ENCODE measurements at regions of chr2 and their contacts with region 1.

Region 1: GRCh38 chr2:196131384-196131937 is 39.9 kb downstream of the STK17B start:
- DNase-seq: peak; percentile 83
- ATAC-seq: peak; percentile 98
- H3K4me3 ChIP-seq: no peak overlapping the region; a peak in 1 of 6 replicates
- H3K27ac ChIP-seq: no peak overlapping the region
- H3K4me1 ChIP-seq: peaks cover 8% of the 10 kb centered on the region
- H3K27me3 ChIP-seq: no peaks in the 10 kb centered on the region
- CTCF ChIP-seq: peak; percentile 96
- EP300 ChIP-seq: no peak
- POLR2A ChIP-seq: no peak
- RAD21 ChIP-seq: peak; percentile 93

Region 2: DNA sequence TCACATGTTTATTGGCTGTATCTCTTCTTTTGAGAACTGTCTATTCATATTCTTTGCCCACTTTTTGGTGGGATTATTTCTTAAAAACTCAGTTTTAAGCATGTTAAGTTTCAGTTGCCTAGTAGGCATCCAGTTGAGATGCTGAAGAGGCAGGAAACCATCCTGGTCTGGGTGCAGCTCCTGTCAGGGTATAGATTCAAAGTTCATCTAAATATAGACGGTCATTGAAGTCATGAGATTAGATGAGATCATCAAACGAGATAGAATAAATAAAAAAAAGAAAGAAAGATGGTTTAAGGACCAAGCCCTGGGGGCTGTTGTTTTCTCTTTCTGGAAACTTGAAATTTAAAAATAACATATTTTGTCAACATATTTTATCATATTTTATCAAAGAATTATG is 53.6 kb before region 1 on chr2:
- CTCF ChIA-PET with region 1: interaction called, 3 read pairs
- POLR2A ChIA-PET with region 1: no interaction called
- in situ Hi-C with region 1: no loop called
- intact Hi-C with region 1: loop called (anchors 1 kb)
- DNase-seq: no peak
- ATAC-seq: 0 out of 3 replicates have a peak, but pooled peaks have one; percentile 31
- H3K4me3 ChIP-seq: no peak overlapping the region
- H3K27ac ChIP-seq: no peak overlapping the region
- H3K4me1 ChIP-seq: peaks cover 19% of the 10 kb centered on the region
- H3K27me3 ChIP-seq: no peaks in the 10 kb centered on the region
- CTCF ChIP-seq: no peak
- EP300 ChIP-seq: no peak
- POLR2A ChIP-seq: no peak
- RAD21 ChIP-seq: no peak

Region 3: GRCh38 chr2:196337208-196337953 is 205.9 kb after region 1 on chr2:
- CTCF ChIA-PET with region 1: interaction called, 54 read pairs
- POLR2A ChIA-PET with region 1: no interaction called
- in situ Hi-C with region 1: loop called (anchors 5 kb)
- intact Hi-C with region 1: loop called (anchors 1 kb)
- DNase-seq: peak; percentile 10
- ATAC-seq: peak; percentile 67
- H3K4me3 ChIP-seq: no peak overlapping the region
- H3K27ac ChIP-seq: no peak overlapping the region
- H3K4me1 ChIP-seq: no peaks in the 10 kb centered on the region
- H3K27me3 ChIP-seq: no peaks in the 10 kb centered on the region
- CTCF ChIP-seq: peak; percentile 50
- EP300 ChIP-seq: no peak
- POLR2A ChIP-seq: no peak
- RAD21 ChIP-seq: no peak

Region 4: GRCh38 chr2:196453613-196454047 is 322.2 kb after region 1 on chr2:
- CTCF ChIA-PET with region 1: interaction called, 8 read pairs
- POLR2A ChIA-PET with region 1: no interaction called
- in situ Hi-C with region 1: loop called (anchors 10 kb)
- intact Hi-C with region 1: loop called (anchors 1 kb)
- DNase-seq: peak; percentile 52
- ATAC-seq: peak; percentile 89
- H3K4me3 ChIP-seq: no peak overlapping the region
- H3K27ac ChIP-seq: no peak overlapping the region
- H3K4me1 ChIP-seq: no peaks in the 10 kb centered on the region
- H3K27me3 ChIP-seq: no peaks in the 10 kb centered on the region
- CTCF ChIP-seq: peak; percentile 67
- EP300 ChIP-seq: no peak
- POLR2A ChIP-seq: no peak
- RAD21 ChIP-seq: no peak

Region 5: DNA sequence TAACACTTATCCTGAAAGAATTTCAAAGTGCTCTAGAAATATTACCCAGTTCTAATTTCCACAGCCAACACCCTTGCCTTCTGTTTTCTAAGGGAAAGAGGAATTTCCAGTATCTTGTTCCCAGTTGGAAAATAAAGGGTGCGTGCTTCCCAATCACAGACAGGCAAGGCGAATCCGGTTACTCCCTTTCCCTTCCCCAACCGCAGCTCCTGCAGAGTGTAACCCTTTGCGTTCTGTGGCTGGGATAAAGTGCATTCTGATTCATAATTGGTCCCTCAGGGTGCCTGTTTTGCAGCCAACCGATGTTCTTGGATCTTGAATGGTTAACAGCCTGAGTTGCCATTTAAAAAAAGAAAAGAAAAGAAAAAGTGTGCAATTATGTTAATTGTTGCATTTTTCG is 835.7 kb after region 1 on chr2:
- CTCF ChIA-PET with region 1: no interaction called
- POLR2A ChIA-PET with region 1: no interaction called
- in situ Hi-C with region 1: no loop called
- intact Hi-C with region 1: no loop called
- DNase-seq: no peak
- ATAC-seq: no peak
- H3K4me3 ChIP-seq: no peak overlapping the region
- H3K27ac ChIP-seq: no peak overlapping the region
- H3K4me1 ChIP-seq: no peaks in the 10 kb centered on the region
- H3K27me3 ChIP-seq: 0 out of 5 replicates have a peak, but pooled peaks cover 0 to 3% of the 10 kb centered on the region in 2 experiments
- CTCF ChIP-seq: no peak
- EP300 ChIP-seq: no peak
- POLR2A ChIP-seq: no peak
- RAD21 ChIP-seq: no peak